ENCODE measurements at regions of chr9 and their contacts with region 1.

Region 1: GRCh38 chr9:134067904-134068743 is at the start of gene BRD3:
- DNase-seq: peak; percentile 93
- ATAC-seq: peak; percentile 84
- H3K4me3 ChIP-seq: peak within 1 kb of the TSS; percentile 54 to 85 (median 68)
- H3K4me3 Mint-ChIP-seq: peak within 1 kb of the TSS; percentile 90
- H3K27ac ChIP-seq: peak within 1 kb of the TSS; percentile 75 to 86
- H3K27ac Mint-ChIP-seq: peak within 1 kb of the TSS; percentile 89
- H3K4me1 ChIP-seq: peaks cover 20 to 30% of the 10 kb centered on the region in 2 donors
- H3K4me1 Mint-ChIP-seq: peaks cover 29% of the 10 kb centered on the region
- H3K27me3 ChIP-seq: peaks cover 0 to 23% (median 10%) of the 10 kb centered on the region in 4 experiments
- H3K27me3 Mint-ChIP-seq: peaks cover 14% of the 10 kb centered on the region
- CTCF ChIP-seq: no peak
- total RNA-seq, gene BRD3: 38.0 and 47.5 TPM in 2 replicates

Region 2: GRCh38 chr9:133149126-133150107 is 918.7 kb before region 1 on chr9:
- CTCF ChIA-PET with region 1: no interaction called
- POLR2A ChIA-PET with region 1: no interaction called
- intact Hi-C with region 1: loop called (anchors 5 kb)
- DNase-seq: peak; percentile 97
- ATAC-seq: peak; percentile 74
- H3K4me3 ChIP-seq: peak overlapping the region in 4 of 5 experiments; percentile 44 to 88 (median 69)
- H3K4me3 Mint-ChIP-seq: peak overlapping the region; percentile 85
- H3K27ac ChIP-seq: peak overlapping the region; percentile 70 to 93
- H3K27ac Mint-ChIP-seq: peak overlapping the region; percentile 94
- H3K4me1 ChIP-seq: peaks cover 25 to 34% of the 10 kb centered on the region in 2 donors
- H3K4me1 Mint-ChIP-seq: peaks cover 37% of the 10 kb centered on the region
- H3K27me3 ChIP-seq: no peaks in the 10 kb centered on the region
- H3K27me3 Mint-ChIP-seq: no peaks in the 10 kb centered on the region
- CTCF ChIP-seq: peak; percentile 62

Region 3: DNA sequence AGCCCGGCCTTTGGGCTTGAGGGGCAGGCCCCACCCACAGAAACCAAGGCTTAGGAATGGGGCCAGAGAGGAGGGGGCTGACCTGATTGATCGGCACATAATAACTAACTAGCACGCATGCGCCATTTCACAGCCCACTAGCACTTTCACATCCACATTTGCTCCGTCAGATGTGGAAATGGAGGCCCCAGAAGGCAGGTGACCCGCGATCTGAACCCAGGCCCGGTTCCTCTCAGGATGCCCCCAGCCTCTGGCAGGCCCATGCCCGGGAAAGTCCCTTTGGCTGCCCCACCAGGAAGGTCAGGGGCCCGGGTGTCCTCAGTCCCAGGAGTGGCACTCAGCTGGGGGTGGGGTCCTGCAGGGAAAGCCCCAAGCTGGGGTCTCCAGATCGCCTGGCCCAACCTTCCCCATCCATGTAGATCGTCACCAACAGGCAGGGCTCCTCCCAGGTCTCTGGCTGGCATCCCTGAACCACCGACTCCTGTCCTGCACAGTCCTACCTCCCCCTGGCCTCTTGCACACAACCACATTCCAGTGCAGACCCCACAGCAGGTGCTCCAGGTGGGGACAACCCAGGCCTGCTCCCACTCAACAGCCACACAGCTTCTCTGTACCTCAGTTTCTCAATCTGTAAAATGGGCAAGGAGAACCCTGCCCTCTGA is 122.7 kb before region 1 on chr9:
- CTCF ChIA-PET with region 1: no interaction called
- POLR2A ChIA-PET with region 1: no interaction called
- intact Hi-C with region 1: loop called (anchors 10 kb)
- DNase-seq: peak; percentile 90
- ATAC-seq: peak; percentile 74
- H3K4me3 ChIP-seq: peak overlapping the region in 3 of 5 experiments; percentile 1 to 44 (median 25)
- H3K4me3 Mint-ChIP-seq: peak overlapping the region; percentile 89
- H3K27ac ChIP-seq: peak overlapping the region; percentile 75 to 83
- H3K27ac Mint-ChIP-seq: peak overlapping the region; percentile 97
- H3K4me1 ChIP-seq: peaks cover 34 to 64% of the 10 kb centered on the region in 2 donors
- H3K4me1 Mint-ChIP-seq: peaks cover 78% of the 10 kb centered on the region
- H3K27me3 ChIP-seq: no peaks in the 10 kb centered on the region
- H3K27me3 Mint-ChIP-seq: no peaks in the 10 kb centered on the region
- CTCF ChIP-seq: no peak

Region 4: GRCh38 chr9:134035041-134036039 is 32.8 kb before region 1 on chr9:
- CTCF ChIA-PET with region 1: no interaction called
- POLR2A ChIA-PET with region 1: no interaction called
- intact Hi-C with region 1: no loop called
- DNase-seq: no peak
- ATAC-seq: no peak
- H3K4me3 ChIP-seq: no peak overlapping the region
- H3K4me3 Mint-ChIP-seq: no peak overlapping the region
- H3K27ac ChIP-seq: no peak overlapping the region
- H3K27ac Mint-ChIP-seq: no peak overlapping the region
- H3K4me1 ChIP-seq: no peaks in the 10 kb centered on the region
- H3K4me1 Mint-ChIP-seq: no peaks in the 10 kb centered on the region
- H3K27me3 ChIP-seq: no peaks in the 10 kb centered on the region
- H3K27me3 Mint-ChIP-seq: no peaks in the 10 kb centered on the region
- CTCF ChIP-seq: no peak

Region 5: DNA sequence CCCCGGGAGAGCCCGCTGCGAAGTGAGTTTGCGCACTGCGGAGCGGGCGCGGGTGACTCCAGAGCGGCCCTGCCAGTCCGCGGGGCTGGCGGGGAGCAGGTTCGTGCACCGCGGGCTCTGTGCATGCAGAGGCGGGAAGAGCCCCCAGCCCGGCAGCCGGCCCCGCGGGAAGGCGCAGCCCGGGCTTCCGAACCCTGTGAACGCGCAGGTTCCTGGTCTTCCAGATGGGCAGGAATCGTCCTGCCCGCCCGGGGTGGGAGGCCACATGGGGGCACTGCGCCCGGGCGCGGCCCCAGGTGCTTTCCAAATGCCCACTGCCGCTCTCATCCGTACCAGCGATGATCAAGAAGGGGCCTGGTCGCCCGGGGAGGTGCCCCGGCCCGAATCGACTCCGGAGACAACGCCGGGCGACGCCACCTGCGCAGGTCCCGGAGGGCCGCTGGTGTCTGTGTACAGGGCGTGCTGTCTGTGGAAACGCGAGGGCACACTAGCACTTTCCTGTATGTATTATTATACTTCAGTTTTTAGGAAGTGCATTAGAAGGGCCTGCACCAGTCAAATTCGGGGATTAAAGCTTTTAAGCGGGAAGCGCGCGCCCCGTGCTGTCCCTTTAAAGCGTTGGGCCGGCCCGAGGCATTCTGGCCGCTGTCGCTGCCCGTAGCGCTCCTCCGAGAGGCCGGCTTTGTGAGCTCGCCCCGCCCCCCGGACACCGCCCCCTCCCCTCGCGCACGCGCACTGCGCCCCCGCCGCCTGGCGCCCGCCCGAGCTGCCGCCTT is 67.4 kb after region 1 on chr9 and contains the start of gene WDR5:
- CTCF ChIA-PET with region 1: no interaction called
- POLR2A ChIA-PET with region 1: no interaction called
- intact Hi-C with region 1: loop called (anchors 1 kb)
- DNase-seq: peak; percentile 93
- ATAC-seq: peak; percentile 86
- H3K4me3 ChIP-seq: peak within 1 kb of the TSS; percentile 46 to 98 (median 92)
- H3K4me3 Mint-ChIP-seq: peak within 1 kb of the TSS; percentile 91
- H3K27ac ChIP-seq: peak within 1 kb of the TSS; percentile 56 to 85
- H3K27ac Mint-ChIP-seq: peak within 1 kb of the TSS; percentile 93
- H3K4me1 ChIP-seq: peaks cover 22 to 30% of the 10 kb centered on the region in 2 donors
- H3K4me1 Mint-ChIP-seq: peaks cover 36% of the 10 kb centered on the region
- H3K27me3 ChIP-seq: no peaks in the 10 kb centered on the region
- H3K27me3 Mint-ChIP-seq: no peaks in the 10 kb centered on the region
- CTCF ChIP-seq: peak; percentile 37
- total RNA-seq, gene WDR5: 21.1 and 23.8 TPM in 2 replicates

Region 6: GRCh38 chr9:134449221-134449894 is 381.2 kb after region 1 on chr9:
- CTCF ChIA-PET with region 1: no interaction called
- POLR2A ChIA-PET with region 1: no interaction called
- intact Hi-C with region 1: loop called (anchors 10 kb)
- DNase-seq: peak; percentile 91
- ATAC-seq: peak; percentile 100
- H3K4me3 ChIP-seq: no peak overlapping the region
- H3K4me3 Mint-ChIP-seq: no peak overlapping the region
- H3K27ac ChIP-seq: no peak overlapping the region
- H3K27ac Mint-ChIP-seq: peak overlapping the region; percentile 46
- H3K4me1 ChIP-seq: peaks cover 0 to 11% of the 10 kb centered on the region in 2 donors
- H3K4me1 Mint-ChIP-seq: peaks cover 18% of the 10 kb centered on the region
- H3K27me3 ChIP-seq: peaks cover 0 to 3% (median 0%) of the 10 kb centered on the region in 4 experiments
- H3K27me3 Mint-ChIP-seq: no peaks in the 10 kb centered on the region
- CTCF ChIP-seq: peak; percentile 81